Panc1 (cell line): ENCODE measurements at regions of chr1 and their contacts with region 1.

Region 1: DNA sequence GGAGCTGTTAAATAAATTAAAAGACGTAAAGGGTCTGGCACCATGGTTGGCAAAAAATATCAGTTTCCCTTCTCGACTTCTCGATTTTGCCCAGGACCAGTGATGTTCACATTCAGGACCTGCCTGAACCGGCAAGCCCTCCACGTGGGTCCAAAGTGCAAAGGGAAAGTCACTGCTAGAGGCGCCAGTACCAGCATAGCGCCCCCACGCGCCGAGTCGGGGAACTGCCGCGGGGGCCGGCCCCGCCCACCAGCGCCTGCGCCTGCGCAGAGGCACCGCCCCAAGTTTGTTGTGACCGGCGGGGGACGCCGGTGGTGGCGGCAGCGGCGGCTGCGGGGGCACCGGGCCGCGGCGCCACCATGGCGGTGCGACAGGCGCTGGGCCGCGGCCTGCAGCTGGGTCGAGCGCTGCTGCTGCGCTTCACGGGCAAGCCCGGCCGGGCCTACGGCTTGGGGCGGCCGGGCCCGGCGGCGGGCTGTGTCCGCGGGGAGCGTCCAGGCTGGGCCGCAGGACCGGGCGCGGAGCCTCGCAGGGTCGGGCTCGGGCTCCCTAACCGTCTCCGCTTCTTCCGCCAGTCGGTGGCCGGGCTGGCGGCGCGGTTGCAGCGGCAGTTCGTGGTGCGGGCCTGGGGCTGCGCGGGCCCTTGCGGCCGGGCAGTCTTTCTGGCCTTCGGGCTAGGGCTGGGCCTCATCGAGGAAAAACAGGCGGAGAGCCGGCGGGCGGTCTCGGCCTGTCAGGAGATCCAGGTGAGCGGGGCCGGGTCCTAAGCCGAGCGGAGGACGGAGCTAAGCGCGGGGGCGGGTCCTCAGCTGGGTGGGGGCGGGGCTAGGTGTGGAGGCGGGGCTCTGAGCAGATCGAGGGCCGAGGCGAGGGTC is at the start of gene PINK1:
- DNase-seq: peak; percentile 39
- ATAC-seq: peak; percentile 93
- H3K4me3 ChIP-seq: peak within 1 kb of the TSS; percentile 70 to 81
- H3K27ac ChIP-seq: peak within 1 kb of the TSS; percentile 73
- H3K4me1 ChIP-seq: peaks cover 15% of the 10 kb centered on the region
- H3K27me3 ChIP-seq: no peaks in the 10 kb centered on the region
- CTCF ChIP-seq: peak; percentile 99
- total RNA-seq, gene PINK1: 32.1 TPM

Region 2: GRCh38 chr1:21182181-21182731 is 548.8 kb after region 1 on chr1:
- CTCF ChIA-PET with region 1: no interaction called
- POLR2A ChIA-PET with region 1: interaction called, 10 read pairs
- in situ Hi-C with region 1: no loop called
- intact Hi-C with region 1: no loop called
- DNase-seq: no peak
- ATAC-seq: peak; percentile 46; the same call in 1 of the 2 replicates
- H3K4me3 ChIP-seq: no peak overlapping the region
- H3K27ac ChIP-seq: no peak overlapping the region
- H3K4me1 ChIP-seq: no peaks in the 10 kb centered on the region
- H3K27me3 ChIP-seq: no peaks in the 10 kb centered on the region
- CTCF ChIP-seq: no peak